ENCODE measurements at regions of chr1 and their contacts with region 1.

Region 1: DNA sequence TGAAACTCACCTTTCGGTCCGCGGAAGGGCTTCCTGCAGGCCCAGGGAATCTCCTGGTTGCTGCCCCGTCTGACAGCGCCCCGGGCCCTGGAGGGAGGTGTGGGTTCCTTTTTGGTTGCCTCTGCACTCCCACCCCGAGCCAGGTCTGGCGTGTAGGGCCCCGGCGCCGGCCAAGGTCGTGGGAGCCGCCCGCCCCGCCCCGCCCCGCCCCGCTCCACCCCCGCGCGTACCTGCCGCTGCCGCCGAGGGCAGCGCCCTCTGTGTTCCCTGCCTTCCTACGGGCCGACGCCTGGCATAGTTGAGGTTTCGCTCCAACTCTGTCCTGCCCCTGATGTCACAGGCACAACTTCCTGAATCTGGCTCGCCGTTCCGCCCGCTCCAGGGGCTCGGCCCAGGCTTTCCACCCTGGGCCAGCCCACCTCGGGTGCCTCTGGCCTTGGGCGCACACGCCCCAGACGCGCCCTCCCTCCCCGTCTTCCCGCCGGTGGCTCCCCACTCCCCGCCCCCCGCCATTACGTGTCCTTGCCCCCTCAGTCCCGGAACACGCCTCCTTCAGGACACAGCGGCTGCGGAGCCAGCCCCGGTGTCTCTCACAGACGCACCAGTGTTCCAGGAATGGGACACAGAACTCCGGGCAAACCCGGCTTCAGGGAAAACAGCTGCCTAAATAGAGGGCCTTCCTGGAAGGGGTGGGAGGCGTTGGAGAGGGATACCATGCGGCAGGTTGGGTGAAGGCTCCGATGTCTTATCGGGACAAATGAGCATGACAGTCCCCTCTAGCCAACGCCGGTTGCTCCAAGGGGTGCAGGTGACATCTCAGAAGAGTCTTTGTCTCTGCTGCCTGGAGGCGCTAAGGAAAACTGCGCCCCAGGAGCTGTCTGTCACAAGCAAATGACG is at the start of gene KIAA0040:
- DNase-seq: peak; percentile 83 to 84
- H3K4me3 ChIP-seq: peak within 1 kb of the TSS; percentile 98
- H3K27ac ChIP-seq: peak within 1 kb of the TSS; percentile 77
- H3K4me1 ChIP-seq: peaks cover 34% of the 10 kb centered on the region
- H3K27me3 ChIP-seq: no peaks in the 10 kb centered on the region
- CTCF ChIP-seq: no peak; the same call in 1 of the 2 replicates
- total RNA-seq, gene KIAA0040: 8.8 and 9.5 TPM in 2 replicates

Region 2: DNA sequence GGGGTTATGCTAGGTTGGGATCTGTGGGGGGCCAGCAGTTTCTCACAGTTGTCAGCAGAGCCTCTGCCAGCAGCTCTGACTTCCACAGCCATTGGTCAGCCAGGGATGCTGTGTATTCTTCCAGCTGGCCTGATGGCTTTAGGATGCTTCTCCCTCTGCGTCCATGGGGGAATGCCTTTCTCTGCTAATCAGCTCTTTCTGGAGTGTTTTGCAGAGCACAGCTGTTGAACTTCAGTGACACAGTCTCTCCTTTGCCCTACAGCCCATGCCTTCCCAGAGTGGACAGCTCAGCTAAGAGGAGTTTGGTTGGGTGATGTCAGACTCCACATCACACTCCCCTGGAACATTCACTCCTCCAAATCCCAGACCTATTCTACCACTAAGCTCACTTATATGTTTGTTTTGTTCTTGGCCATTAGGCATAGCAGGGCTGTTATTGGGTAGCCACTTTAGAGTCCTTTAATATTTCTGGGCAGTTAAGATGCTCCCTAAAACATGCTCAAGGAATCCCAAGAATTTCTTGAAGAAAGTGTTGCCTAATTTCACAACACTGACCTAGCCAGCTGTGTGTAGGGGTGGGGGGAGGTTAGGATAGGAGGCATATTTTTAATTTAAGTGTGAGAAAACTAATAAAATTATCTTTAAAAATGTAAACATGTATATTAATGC is 75.0 kb after region 1 on chr1:
- CTCF ChIA-PET with region 1: no interaction called
- POLR2A ChIA-PET with region 1: no interaction called
- intact Hi-C with region 1: loop called (anchors 1 kb)
- DNase-seq: peak in 1 of 2 experiments; percentile 48
- H3K4me3 ChIP-seq: no peak overlapping the region
- H3K27ac ChIP-seq: peak overlapping the region; percentile 98
- H3K4me1 ChIP-seq: peaks cover 40% of the 10 kb centered on the region
- H3K27me3 ChIP-seq: no peaks in the 10 kb centered on the region
- CTCF ChIP-seq: no peak

Region 3: DNA sequence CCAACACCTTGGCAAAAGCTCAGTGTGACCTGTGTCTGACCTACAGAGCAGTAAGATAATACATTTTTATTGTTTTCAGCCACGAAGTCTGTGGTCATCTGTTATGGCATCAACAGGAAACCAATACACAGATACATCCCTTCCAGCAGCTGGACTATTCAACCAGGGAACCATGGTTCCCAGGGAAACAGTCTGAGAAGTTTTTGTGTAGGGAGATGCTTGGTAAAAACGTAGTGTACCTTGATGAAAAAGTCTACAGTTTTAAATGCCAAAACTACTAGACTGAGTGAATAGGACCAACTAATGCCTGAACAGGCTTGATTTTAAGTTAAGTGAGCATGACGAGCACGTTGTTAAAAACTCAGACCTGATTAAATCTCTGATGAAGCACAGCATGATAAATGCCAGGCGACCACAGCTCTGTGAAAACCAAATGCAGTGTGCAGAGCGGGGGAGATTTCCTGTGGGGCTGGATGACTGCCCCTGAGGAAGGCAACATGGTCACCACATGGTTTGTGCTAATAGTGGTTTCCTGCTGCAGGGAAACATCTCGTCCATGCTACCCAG is 321.6 kb after region 1 on chr1:
- CTCF ChIA-PET with region 1: no interaction called
- POLR2A ChIA-PET with region 1: no interaction called
- intact Hi-C with region 1: no loop called
- DNase-seq: no peak
- H3K4me3 ChIP-seq: no peak overlapping the region
- H3K27ac ChIP-seq: no peak overlapping the region
- H3K4me1 ChIP-seq: no peaks in the 10 kb centered on the region
- H3K27me3 ChIP-seq: no peaks in the 10 kb centered on the region
- CTCF ChIP-seq: no peak

Region 4: DNA sequence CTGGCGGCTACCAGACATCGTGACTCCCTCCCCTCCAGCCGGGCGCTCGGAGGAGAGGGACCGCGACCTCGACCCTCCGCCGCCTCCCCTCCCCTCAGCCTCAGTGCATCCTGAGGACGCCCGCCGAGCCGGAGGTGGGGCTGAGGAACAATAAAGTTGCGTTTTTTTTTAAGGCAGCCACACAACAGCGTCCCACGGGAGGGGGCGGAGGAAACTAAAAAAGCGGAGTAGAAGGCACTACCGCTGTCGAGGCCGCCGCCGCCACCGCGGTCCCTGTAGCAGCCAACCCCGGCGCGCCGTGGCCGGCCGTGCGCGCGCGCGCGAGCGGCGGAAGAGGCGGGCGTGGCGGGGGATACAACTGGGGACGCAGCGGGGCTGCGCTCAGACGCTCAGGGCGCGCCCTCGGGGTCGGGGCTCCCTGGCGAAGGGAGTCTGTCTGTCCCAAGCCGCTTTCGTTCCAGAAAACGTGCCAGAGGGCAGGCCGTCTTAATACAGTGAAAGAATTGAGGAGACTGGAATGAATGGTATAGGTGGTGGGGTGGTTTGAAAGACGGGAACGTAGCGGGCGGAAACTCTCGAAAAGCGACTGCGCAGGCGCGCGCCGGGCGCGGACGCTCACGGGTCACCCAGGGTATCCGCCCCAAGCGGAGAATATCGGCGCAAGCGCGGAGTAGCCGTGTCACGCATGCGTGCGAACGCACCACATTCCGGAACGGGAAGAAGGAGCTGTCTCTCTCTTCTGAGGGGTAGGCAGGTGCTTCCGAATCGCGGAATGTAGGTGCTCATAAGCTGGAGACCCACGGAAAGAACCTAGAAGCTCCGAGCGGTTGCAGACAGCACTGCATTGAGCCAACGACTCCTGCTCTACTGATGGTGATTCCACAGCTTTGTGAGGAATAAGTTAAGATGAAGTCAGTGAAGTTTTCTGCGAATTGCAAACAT is 1014.4 kb after region 1 on chr1 and contains the start of gene COP1:
- CTCF ChIA-PET with region 1: no interaction called
- POLR2A ChIA-PET with region 1: no interaction called
- intact Hi-C with region 1: loop called (anchors 2 kb)
- DNase-seq: peak; percentile 94 to 96
- H3K4me3 ChIP-seq: peak within 1 kb of the TSS; percentile 99
- H3K27ac ChIP-seq: peak within 1 kb of the TSS; percentile 71
- H3K4me1 ChIP-seq: peaks cover 41% of the 10 kb centered on the region
- H3K27me3 ChIP-seq: no peaks in the 10 kb centered on the region
- CTCF ChIP-seq: no peak
- total RNA-seq, gene COP1: 36.0 and 38.0 TPM in 2 replicates